Activated T-helper 2 cell treated with anti-CD3 and anti-CD28 coated beads, Interferon-gamma antibody, Interleukin-2, Interleukin-4, amounts not matched to agents 10 μg/mL and 5 μg/mL and 100 μg/mL, durations not matched to agents 14 hours and 24 hours and 36 hours (primary cell): ENCODE measurements at regions of chr4 and their contacts with region 1.

Region 1: DNA sequence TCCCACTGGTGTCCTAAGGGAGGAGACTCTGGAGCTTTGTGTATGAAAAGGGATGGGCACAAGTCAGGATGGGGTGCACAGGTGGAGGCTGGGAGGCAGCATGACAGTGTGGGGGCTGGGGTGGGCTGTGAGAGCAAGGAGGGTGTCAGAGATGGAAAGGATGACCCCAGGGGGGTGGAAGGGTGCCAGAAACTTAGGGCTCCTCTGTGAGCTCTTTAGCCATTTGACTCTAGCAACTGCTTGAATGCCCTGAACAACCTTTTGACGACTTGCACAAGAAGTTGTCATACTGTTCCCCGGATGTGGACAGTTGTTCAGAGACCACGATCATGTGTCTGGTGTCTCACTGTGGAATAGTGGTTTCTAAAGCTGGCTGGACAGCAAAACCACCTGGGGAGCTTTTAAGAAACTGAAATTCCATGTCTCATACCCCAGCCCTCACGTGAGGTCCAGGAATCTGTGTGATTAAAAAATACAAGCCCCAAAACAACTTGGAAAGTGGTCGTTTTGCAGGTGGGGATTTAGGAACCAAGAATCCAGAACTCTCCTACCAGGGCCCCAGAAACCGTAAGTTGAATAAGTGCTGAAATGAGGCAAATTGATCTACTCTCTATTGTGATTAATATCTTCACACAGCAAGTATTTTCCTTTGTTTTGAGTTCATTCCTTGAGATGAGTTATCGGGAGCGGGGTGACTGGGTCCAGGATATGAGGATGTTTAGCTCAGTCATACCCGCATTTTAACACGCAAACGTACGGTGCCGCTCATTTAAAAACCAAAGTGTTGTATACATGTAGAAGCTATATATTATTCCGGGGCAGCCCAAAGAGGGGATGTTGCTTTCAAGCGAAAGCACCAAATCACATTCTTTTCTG is 3.4 kb downstream of the RHOH start:
- DNase-seq: peak; percentile 74
- H3K4me3 Mint-ChIP-seq: peak overlapping the region; percentile 90
- H3K27ac Mint-ChIP-seq: peak overlapping the region; percentile 94
- H3K4me1 Mint-ChIP-seq: peaks cover 52% of the 10 kb centered on the region
- H3K27me3 Mint-ChIP-seq: no peaks in the 10 kb centered on the region

Region 2: DNA sequence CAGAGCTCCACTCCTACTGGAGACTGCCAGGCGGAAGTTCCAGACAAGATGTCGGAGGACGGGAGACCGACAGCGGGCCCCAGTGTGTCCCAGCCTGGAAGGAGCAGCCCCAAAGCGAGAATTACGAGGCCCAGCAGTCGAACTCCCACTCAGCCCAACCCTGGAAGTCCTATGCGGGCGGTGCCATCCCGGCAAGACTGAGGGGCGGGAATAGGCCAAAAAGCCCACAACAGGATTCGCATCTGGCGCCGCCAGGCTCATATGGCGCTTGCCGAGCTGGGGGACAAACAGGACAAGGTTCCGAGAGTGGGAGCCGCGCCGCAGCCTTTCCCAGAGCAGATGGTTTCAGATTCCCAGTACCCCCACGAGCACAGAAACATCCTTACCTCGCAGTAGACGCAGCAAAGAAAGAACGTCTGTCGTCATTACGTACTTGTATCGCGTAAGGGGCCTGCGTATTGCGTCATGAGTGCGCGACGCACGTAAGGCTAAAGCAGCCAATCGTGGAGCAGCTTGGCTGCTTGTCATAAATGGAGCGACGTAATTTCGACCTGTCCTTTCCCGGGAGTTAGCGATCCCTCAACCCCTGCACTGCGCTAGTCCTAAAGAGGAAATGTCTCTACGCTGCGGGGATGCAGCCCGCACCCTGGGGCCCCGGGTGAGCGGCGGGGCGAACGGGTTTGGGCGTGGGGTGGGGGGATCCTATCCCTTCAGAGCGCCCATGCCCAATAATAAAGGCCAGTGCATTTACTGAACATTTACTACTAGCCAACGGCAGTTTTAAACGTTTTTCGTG is 741.5 kb before region 1 on chr4 and contains the starts of genes LIAS and RPL9:
- intact Hi-C with region 1: loop called (anchors 5 kb)
- DNase-seq: peak; percentile 93
- H3K4me3 Mint-ChIP-seq: peak within 1 kb of the TSS; percentile 95
- H3K27ac Mint-ChIP-seq: peak within 1 kb of the TSS; percentile 98
- H3K4me1 Mint-ChIP-seq: peaks cover 23% of the 10 kb centered on the region
- H3K27me3 Mint-ChIP-seq: no peaks in the 10 kb centered on the region
- total RNA-seq, gene LIAS: 19.1 and 19.8 TPM in 2 replicates
- total RNA-seq, gene RPL9: 1,761 and 1,779 TPM in 2 replicates

Region 3: DNA sequence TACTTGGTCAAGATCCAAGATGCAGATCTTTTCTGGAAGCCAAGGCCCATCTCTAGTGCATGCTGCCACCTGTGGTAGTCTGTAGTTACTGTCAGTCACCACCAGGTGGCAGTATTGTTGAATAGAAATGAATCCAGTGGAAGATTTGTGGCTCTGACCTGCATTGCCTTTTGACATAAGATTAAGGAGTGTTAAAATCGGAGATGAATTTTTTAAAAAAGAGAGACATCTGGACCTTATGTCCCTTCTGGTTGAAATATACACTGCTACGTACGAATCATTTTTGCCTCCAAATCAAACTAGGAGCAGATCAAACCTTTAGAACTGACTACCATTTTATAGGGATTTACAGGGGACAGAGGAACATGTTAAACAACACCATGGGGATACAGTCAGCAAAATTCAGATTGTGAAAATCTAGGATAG is 50.3 kb before region 1 on chr4:
- intact Hi-C with region 1: loop called (anchors 5 kb)
- DNase-seq: peak; percentile 61
- H3K4me3 Mint-ChIP-seq: no peak overlapping the region
- H3K27ac Mint-ChIP-seq: peak overlapping the region; percentile 42
- H3K4me1 Mint-ChIP-seq: peaks cover 10% of the 10 kb centered on the region
- H3K27me3 Mint-ChIP-seq: no peaks in the 10 kb centered on the region

Region 4: GRCh38 chr4:40228497-40229365 is 28.5 kb after region 1 on chr4:
- intact Hi-C with region 1: loop called (anchors 1 kb)
- DNase-seq: no peak
- H3K4me3 Mint-ChIP-seq: peak overlapping the region; percentile 71
- H3K27ac Mint-ChIP-seq: peak overlapping the region; percentile 96
- H3K4me1 Mint-ChIP-seq: peaks cover 77% of the 10 kb centered on the region
- H3K27me3 Mint-ChIP-seq: no peaks in the 10 kb centered on the region

Region 5: DNA sequence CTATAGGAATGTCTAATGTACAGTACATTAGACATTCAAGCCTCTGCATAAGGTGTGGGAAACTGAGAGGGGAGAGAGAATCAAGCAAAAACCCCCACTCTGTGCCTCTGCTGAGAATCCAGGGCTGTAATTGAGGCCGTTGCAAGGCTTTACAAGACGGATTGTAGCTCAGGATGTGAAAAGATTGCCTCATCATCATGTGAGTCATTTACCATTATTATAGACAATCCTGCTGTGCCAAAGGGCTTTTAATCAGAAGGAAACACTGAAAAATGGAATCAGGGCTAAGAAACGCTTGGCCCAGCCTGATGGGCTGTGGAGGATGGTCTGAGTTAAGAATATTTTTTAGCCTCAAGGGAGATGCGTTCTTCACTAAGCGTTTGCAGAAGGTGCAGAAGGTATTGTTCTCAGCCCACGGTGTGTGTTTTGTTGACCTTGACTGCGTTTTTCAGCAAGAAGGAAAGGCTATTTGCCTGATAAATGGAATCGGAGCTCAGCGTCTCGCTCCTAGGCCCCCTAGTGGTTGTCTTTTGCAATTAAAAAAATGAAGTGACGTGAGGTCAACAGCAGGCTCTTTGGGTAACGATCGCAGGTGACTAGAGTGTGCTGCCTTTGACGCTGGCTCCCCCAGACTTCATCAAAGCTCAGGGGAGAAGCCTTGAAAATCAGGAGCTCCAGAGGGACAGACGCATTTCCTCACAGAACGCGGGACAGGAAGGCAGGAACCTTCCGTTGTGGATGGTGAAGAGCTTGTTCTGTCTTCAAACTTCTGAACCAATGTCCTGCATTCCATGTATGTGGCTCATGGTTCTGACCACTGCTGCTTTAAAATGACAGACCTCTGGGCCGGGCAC is 116.8 kb after region 1 on chr4:
- intact Hi-C with region 1: loop called (anchors 2 kb)
- DNase-seq: peak; percentile 64
- H3K4me3 Mint-ChIP-seq: peak overlapping the region; percentile 83
- H3K27ac Mint-ChIP-seq: peak overlapping the region; percentile 99
- H3K4me1 Mint-ChIP-seq: peaks cover 46% of the 10 kb centered on the region
- H3K27me3 Mint-ChIP-seq: no peaks in the 10 kb centered on the region

Region 6: DNA sequence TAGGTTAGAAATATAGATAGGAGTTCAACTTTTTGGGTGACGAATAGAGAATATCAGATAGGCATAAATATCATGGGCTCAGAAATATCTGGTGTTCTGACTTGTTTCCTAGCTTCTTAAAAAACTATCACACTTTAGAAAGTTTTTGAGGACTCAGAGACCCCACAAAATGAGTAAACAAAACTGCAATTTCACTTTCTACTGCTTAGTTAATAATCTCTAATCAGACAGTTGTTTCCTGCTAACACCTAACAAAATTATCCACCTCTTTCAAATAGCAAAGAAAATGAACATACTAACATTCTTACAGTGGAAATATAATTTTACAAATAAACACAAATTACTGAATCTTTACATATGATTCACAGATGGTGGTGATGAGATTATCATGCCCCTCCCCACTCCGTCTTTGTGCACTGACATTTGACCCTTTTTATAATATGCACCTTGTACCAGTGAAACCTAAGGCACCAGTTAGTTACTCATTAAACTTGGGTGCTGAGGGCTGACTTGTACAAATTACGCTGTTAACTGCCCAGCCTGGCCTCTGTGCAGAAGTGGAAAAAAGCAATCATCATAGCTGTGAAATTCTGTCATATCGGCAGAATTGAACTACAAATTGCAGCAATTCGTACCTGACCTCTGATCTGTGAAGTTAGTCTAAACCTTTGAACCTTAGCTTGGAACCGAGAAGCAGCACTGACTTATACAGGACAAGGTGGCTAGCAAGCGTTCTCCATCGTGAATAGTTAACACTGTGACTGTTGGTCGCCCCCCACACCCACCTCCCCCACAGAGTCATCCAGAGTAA is 273.5 kb after region 1 on chr4:
- intact Hi-C with region 1: no loop called
- DNase-seq: no peak
- H3K4me3 Mint-ChIP-seq: no peak overlapping the region
- H3K27ac Mint-ChIP-seq: no peak overlapping the region
- H3K4me1 Mint-ChIP-seq: peaks cover 35% of the 10 kb centered on the region
- H3K27me3 Mint-ChIP-seq: no peaks in the 10 kb centered on the region

Region 7: GRCh38 chr4:40719008-40719623 is 518.9 kb after region 1 on chr4:
- intact Hi-C with region 1: loop called (anchors 5 kb)
- DNase-seq: no peak
- H3K4me3 Mint-ChIP-seq: no peak overlapping the region
- H3K27ac Mint-ChIP-seq: no peak overlapping the region
- H3K4me1 Mint-ChIP-seq: peaks cover 35% of the 10 kb centered on the region
- H3K27me3 Mint-ChIP-seq: no peaks in the 10 kb centered on the region